Activated naive CD4-positive, alpha-beta T cell treated with anti-CD3 and anti-CD28 coated beads for 36 hours (primary cell): ENCODE measurements at regions of chr1 and their contacts with region 1.

Region 1: DNA sequence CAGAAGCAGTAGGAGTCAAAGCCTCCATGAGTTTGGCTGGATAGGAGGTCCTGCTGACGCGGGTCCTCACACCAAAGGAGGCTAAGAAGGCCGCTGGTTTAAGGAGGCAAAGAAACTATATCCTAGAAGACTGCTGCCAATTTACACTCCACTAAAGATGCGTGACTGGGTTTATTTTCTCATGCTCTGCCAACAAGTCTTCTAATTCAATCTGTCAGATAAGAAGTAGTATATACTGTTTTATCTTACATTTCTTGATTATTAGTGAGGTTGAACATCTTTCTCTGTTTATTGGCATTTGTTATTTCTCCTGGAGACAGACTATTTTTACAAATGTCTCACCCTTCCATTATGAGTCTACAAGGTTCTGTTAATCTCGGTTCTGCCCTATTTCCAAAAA is 34.1 kb downstream of the ACBD6 start:
- DNase-seq: no peak
- H3K4me3 Mint-ChIP-seq: no peak overlapping the region
- H3K27ac Mint-ChIP-seq: no peak overlapping the region
- H3K4me1 Mint-ChIP-seq: peaks cover 13% of the 10 kb centered on the region
- H3K27me3 Mint-ChIP-seq: no peaks in the 10 kb centered on the region

Region 2: DNA sequence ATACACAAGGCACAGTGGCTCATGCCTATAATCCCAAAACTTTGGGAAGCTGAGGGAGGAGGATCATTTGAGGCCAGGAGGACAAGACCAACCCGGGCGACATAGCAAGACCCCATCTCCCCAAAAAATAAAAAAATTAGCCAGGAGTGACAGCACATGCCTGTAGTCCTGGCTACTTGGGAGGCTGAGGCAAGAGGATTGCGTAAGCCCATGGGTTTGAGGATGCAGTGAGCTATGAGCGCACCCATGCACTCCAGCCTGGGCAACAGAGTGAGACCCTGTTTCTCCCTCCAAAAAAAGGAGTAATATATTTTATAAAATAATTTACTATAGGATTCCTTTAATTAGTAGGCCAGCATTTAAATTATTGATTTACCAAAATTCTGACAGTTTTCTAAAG is 55.7 kb before region 1 on chr1:
- CTCF ChIA-PET with region 1: no interaction called
- intact Hi-C with region 1: no loop called
- DNase-seq: no peak
- H3K4me3 Mint-ChIP-seq: no peak overlapping the region
- H3K27ac Mint-ChIP-seq: no peak overlapping the region
- H3K4me1 Mint-ChIP-seq: no peaks in the 10 kb centered on the region
- H3K27me3 Mint-ChIP-seq: no peaks in the 10 kb centered on the region

Region 3: GRCh38 chr1:180424848-180425457 is 43.4 kb before region 1 on chr1:
- CTCF ChIA-PET with region 1: no interaction called
- intact Hi-C with region 1: loop called (anchors 5 kb)
- DNase-seq: no peak
- H3K4me3 Mint-ChIP-seq: no peak overlapping the region
- H3K27ac Mint-ChIP-seq: no peak overlapping the region
- H3K4me1 Mint-ChIP-seq: peaks cover 10% of the 10 kb centered on the region
- H3K27me3 Mint-ChIP-seq: no peaks in the 10 kb centered on the region